ENCODE measurements at regions of chr11 and their contacts with region 1.

Region 1: GRCh38 chr11:9384535-9385303 is at the start of gene IPO7:
- DNase-seq: peak; percentile 94
- H3K4me3 ChIP-seq: peak within 1 kb of the TSS; percentile 97
- H3K27ac ChIP-seq: peak within 1 kb of the TSS; percentile 64
- H3K4me1 ChIP-seq: peaks cover 27% of the 10 kb centered on the region
- CTCF ChIP-seq: peak; percentile 49
- total RNA-seq, gene IPO7: 88.3 and 120 TPM in 2 replicates

Region 2: DNA sequence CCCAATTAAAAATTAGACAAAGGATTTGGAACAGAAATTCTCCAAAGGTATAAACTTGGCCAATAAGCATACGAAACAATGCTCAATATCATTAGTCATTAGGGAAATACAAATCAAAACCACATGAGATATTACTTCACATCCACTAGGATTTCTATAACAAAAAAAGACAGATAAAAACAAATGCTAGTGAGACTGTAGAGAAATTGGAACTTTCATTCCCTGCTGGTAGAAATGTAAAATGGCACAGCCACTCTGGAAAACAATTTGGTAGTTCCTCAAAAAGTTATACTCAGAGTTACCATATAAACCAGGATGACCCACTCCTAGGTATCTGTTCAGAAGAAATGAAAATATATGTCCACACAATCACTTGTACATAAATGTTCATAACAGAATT is 630.5 kb before region 1 on chr11:
- CTCF ChIA-PET with region 1: no interaction called
- POLR2A ChIA-PET with region 1: no interaction called
- intact Hi-C with region 1: no loop called
- DNase-seq: no peak
- H3K4me3 ChIP-seq: no peak overlapping the region
- H3K27ac ChIP-seq: no peak overlapping the region
- H3K4me1 ChIP-seq: no peaks in the 10 kb centered on the region
- CTCF ChIP-seq: no peak

Region 3: GRCh38 chr11:9003573-9004309 is 381.0 kb before region 1 on chr11 and contains the start of gene NRIP3:
- CTCF ChIA-PET with region 1: no interaction called
- POLR2A ChIA-PET with region 1: no interaction called
- intact Hi-C with region 1: no loop called
- DNase-seq: no peak
- H3K4me3 ChIP-seq: no peak within 1 kb of the TSS
- H3K27ac ChIP-seq: no peak within 1 kb of the TSS
- H3K4me1 ChIP-seq: no peaks in the 10 kb centered on the region
- CTCF ChIP-seq: no peak
- total RNA-seq, gene NRIP3: not detected in 2 replicates

Region 4: GRCh38 chr11:9363954-9364912 is 20.5 kb before region 1 on chr11:
- CTCF ChIA-PET with region 1: no interaction called
- POLR2A ChIA-PET with region 1: interaction called, 4 read pairs
- intact Hi-C with region 1: loop called (anchors 1 kb)
- DNase-seq: peak; percentile 75
- H3K4me3 ChIP-seq: peak overlapping the region; percentile 65
- H3K27ac ChIP-seq: peak overlapping the region; percentile 31
- H3K4me1 ChIP-seq: peaks cover 5% of the 10 kb centered on the region
- CTCF ChIP-seq: no peak

Region 5: GRCh38 chr11:9396752-9397151 is 12.0 kb after region 1 on chr11:
- CTCF ChIA-PET with region 1: interaction called, 5 read pairs
- POLR2A ChIA-PET with region 1: interaction called, 15 read pairs
- intact Hi-C with region 1: no loop called
- DNase-seq: no peak
- H3K4me3 ChIP-seq: no peak overlapping the region
- H3K27ac ChIP-seq: no peak overlapping the region
- H3K4me1 ChIP-seq: peaks cover 45% of the 10 kb centered on the region
- CTCF ChIP-seq: no peak

Region 6: GRCh38 chr11:10314199-10315072 is 929.7 kb after region 1 on chr11:
- CTCF ChIA-PET with region 1: interaction called, 3 read pairs
- POLR2A ChIA-PET with region 1: no interaction called
- intact Hi-C with region 1: loop called (anchors 10 kb)
- DNase-seq: peak; percentile 92
- H3K4me3 ChIP-seq: peak overlapping the region; percentile 50
- H3K27ac ChIP-seq: peak overlapping the region; percentile 93
- H3K4me1 ChIP-seq: peaks cover 96% of the 10 kb centered on the region
- CTCF ChIP-seq: no peak